GM12878 (cell line): ENCODE measurements at regions of chr14 and their contacts with region 1.

Region 1: DNA sequence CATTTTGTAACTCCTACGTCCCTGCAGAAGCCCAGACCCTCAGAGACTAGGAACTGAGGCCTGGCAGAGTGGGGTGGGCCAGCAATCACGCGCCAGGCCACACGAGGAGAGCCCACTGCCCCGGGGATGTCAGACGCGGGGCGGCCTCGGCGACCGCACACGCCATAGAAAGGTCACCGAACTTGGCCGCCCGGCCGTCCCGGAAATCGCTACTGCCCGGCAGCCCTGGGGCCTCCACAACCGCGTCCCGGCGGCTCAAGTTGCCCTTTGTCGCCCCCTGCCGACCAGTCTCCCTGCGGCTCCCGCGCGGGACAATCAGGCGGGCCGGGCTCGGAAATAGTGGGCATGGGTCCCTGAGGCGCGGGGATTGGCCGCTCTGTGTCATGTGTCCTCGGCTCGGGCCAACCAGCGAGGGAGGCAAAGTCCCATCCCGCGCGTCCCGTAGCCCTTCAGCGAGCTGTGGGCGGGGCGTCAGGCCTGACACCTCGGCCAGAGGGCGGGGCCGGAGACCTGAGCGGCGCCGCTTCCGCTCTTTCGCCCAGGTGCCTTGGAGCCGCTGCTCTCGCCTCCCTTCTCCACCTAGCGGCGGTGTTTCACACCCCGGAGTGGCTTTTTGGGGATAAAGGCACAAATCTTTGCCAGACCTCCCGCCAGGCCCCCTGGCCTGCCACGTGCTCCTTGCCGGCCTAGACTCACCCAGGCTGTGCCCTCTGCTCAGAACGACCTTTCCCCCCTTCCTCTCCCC is 33.4 kb upstream of the DEGS2 start:
- DNase-seq: peak; percentile 96
- ATAC-seq: peak; percentile 99
- H3K4me3 ChIP-seq: peak overlapping the region; percentile 68
- H3K27ac ChIP-seq: peak overlapping the region; percentile 86
- H3K4me1 ChIP-seq: peaks cover 11% of the 10 kb centered on the region
- H3K27me3 ChIP-seq: no peaks in the 10 kb centered on the region
- CTCF ChIP-seq: peak; percentile 73 to 91 (median 80)
- EP300 ChIP-seq: no peak
- POLR2A ChIP-seq: peak; percentile 85
- RAD21 ChIP-seq: peak; percentile 73

Region 2: GRCh38 chr14:100056964-100057795 is 135.7 kb before region 1 on chr14:
- CTCF ChIA-PET with region 1: interaction called, 13 read pairs
- POLR2A ChIA-PET with region 1: no interaction called
- RAD21 ChIA-PET with region 1: interaction called, 9 read pairs
- SMC1A ChIA-PET with region 1: interaction called, 3 read pairs
- in situ Hi-C with region 1: no loop called
- intact Hi-C with region 1: loop called (anchors 1 kb)
- DNase-seq: no peak
- ATAC-seq: peak; percentile 80
- H3K4me3 ChIP-seq: no peak overlapping the region
- H3K27ac ChIP-seq: peak overlapping the region; percentile 53
- H3K4me1 ChIP-seq: peaks cover 37% of the 10 kb centered on the region
- H3K27me3 ChIP-seq: no peaks in the 10 kb centered on the region
- CTCF ChIP-seq: peak; percentile 53 to 76 (median 61)
- EP300 ChIP-seq: no peak
- POLR2A ChIP-seq: no peak
- RAD21 ChIP-seq: peak; percentile 85

Region 3: GRCh38 chr14:100147181-100147631 is 45.6 kb before region 1 on chr14:
- CTCF ChIA-PET with region 1: interaction called, 3 read pairs
- POLR2A ChIA-PET with region 1: no interaction called
- RAD21 ChIA-PET with region 1: no interaction called
- SMC1A ChIA-PET with region 1: no interaction called
- in situ Hi-C with region 1: no loop called
- intact Hi-C with region 1: loop called (anchors 1 kb)
- DNase-seq: no peak
- ATAC-seq: peak; percentile 37
- H3K4me3 ChIP-seq: no peak overlapping the region
- H3K27ac ChIP-seq: no peak overlapping the region
- H3K4me1 ChIP-seq: no peaks in the 10 kb centered on the region
- H3K27me3 ChIP-seq: no peaks in the 10 kb centered on the region
- CTCF ChIP-seq: no peak
- EP300 ChIP-seq: no peak
- POLR2A ChIP-seq: peak; percentile 52; the same call in 1 of the 2 replicates
- RAD21 ChIP-seq: no peak

Region 4: GRCh38 chr14:100213956-100214774 is 21.3 kb after region 1 on chr14:
- CTCF ChIA-PET with region 1: interaction called, 29 read pairs
- POLR2A ChIA-PET with region 1: interaction called, 3 read pairs
- RAD21 ChIA-PET with region 1: interaction called, 7 read pairs
- SMC1A ChIA-PET with region 1: interaction called, 3 read pairs
- in situ Hi-C with region 1: no loop called
- intact Hi-C with region 1: loop called (anchors 1 kb)
- DNase-seq: no peak
- ATAC-seq: peak; percentile 98
- H3K4me3 ChIP-seq: peak overlapping the region; percentile 90
- H3K27ac ChIP-seq: peak overlapping the region; percentile 90
- H3K4me1 ChIP-seq: peaks cover 9% of the 10 kb centered on the region; the same call in 1 of the 2 replicates
- H3K27me3 ChIP-seq: no peaks in the 10 kb centered on the region
- CTCF ChIP-seq: no peak
- EP300 ChIP-seq: no peak
- POLR2A ChIP-seq: peak; percentile 97
- RAD21 ChIP-seq: no peak

Region 5: GRCh38 chr14:100234511-100234910 is 41.7 kb after region 1 on chr14:
- CTCF ChIA-PET with region 1: interaction called, 20 read pairs
- POLR2A ChIA-PET with region 1: interaction called, 3 read pairs
- RAD21 ChIA-PET with region 1: interaction called, 4 read pairs
- SMC1A ChIA-PET with region 1: interaction called, 3 read pairs
- in situ Hi-C with region 1: no loop called
- intact Hi-C with region 1: no loop called
- DNase-seq: no peak
- ATAC-seq: no peak
- H3K4me3 ChIP-seq: no peak overlapping the region; the same call in 1 of the 2 replicates
- H3K27ac ChIP-seq: no peak overlapping the region
- H3K4me1 ChIP-seq: no peaks in the 10 kb centered on the region
- H3K27me3 ChIP-seq: no peaks in the 10 kb centered on the region
- CTCF ChIP-seq: no peak
- EP300 ChIP-seq: no peak
- POLR2A ChIP-seq: no peak
- RAD21 ChIP-seq: no peak

Region 6: DNA sequence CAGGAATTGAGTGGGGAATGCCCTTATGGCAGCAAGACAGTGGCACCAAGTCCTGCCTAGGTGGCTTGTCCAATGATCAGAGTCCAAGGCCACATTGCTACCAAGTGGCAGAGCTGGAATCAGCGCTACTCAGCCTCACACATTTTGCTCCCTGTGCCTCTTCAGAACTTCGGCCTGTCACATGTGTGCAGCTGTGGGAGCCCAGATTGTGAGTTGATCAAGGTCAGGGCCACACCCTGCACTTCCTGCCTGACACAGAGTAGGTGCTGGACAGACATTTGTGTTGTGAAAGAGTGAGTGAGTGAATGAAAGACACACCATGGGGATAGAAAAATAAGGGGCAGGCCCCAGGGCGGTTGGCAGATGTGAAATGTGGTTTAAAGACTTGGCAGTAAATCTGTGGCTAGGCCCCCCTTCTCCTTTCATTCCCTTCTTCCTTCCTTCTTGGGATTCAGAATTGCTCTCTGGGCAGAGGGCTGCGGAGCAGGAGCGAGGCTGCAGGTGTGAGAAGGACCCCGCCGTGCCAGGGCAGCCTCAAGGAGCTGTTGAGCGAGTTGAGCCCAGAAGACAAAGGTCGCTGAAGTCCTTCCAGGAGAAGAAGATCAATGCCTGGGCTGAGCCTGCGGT is 213.8 kb after region 1 on chr14:
- CTCF ChIA-PET with region 1: no interaction called
- POLR2A ChIA-PET with region 1: no interaction called
- RAD21 ChIA-PET with region 1: no interaction called
- SMC1A ChIA-PET with region 1: no interaction called
- in situ Hi-C with region 1: no loop called
- intact Hi-C with region 1: no loop called
- DNase-seq: no peak
- ATAC-seq: no peak
- H3K4me3 ChIP-seq: no peak overlapping the region
- H3K27ac ChIP-seq: no peak overlapping the region
- H3K4me1 ChIP-seq: no peaks in the 10 kb centered on the region; the same call in 1 of the 2 replicates
- H3K27me3 ChIP-seq: no peaks in the 10 kb centered on the region
- CTCF ChIP-seq: no peak
- EP300 ChIP-seq: no peak
- POLR2A ChIP-seq: no peak
- RAD21 ChIP-seq: no peak

Region 7: DNA sequence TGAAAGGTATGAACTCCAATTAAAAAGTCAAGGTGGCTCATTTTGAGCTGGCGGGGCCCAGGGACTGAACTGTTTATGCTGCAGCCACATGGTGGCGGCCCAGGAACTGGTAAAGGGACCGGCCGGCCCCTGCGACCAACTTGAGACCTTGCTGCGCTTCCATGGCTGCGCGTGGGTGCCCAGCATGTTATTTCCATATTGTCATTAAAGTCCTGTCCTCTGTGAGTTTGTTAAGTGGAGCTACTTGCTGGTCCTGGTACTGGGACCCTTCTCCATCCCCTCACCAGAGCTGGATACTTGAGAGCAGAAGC is 332.0 kb after region 1 on chr14:
- CTCF ChIA-PET with region 1: no interaction called
- POLR2A ChIA-PET with region 1: no interaction called
- RAD21 ChIA-PET with region 1: no interaction called
- SMC1A ChIA-PET with region 1: no interaction called
- in situ Hi-C with region 1: no loop called
- intact Hi-C with region 1: no loop called
- DNase-seq: no peak
- ATAC-seq: no peak
- H3K4me3 ChIP-seq: no peak overlapping the region
- H3K27ac ChIP-seq: no peak overlapping the region
- H3K4me1 ChIP-seq: no peaks in the 10 kb centered on the region
- H3K27me3 ChIP-seq: no peaks in the 10 kb centered on the region
- CTCF ChIP-seq: peak; percentile 14 to 23 (median 18); a peak in 3 of 6 replicates
- EP300 ChIP-seq: no peak
- POLR2A ChIP-seq: no peak
- RAD21 ChIP-seq: peak; percentile 29; the same call in 1 of the 2 replicates